SK-N-SH (cell line): ENCODE measurements at regions of chr1 and their contacts with region 1.

Region 1: GRCh38 chr1:26233903-26234643 is at the start of gene CEP85:
- DNase-seq: peak; percentile 99
- H3K4me3 ChIP-seq: peak within 1 kb of the TSS; percentile 86 to 99
- H3K27ac ChIP-seq: peak within 1 kb of the TSS; percentile 72 to 86
- H3K4me1 ChIP-seq: peaks cover 6 to 10% of the 10 kb centered on the region in 2 experiments; a peak in 2 of 4 replicates
- H3K27me3 ChIP-seq: no peaks in the 10 kb centered on the region
- CTCF ChIP-seq: peak; percentile 83
- EP300 ChIP-seq: no peak
- RAD21 ChIP-seq: peak; percentile 69
- polyA plus RNA-seq, gene CEP85: 12.1 and 16.6 TPM in 2 replicates

Region 2: DNA sequence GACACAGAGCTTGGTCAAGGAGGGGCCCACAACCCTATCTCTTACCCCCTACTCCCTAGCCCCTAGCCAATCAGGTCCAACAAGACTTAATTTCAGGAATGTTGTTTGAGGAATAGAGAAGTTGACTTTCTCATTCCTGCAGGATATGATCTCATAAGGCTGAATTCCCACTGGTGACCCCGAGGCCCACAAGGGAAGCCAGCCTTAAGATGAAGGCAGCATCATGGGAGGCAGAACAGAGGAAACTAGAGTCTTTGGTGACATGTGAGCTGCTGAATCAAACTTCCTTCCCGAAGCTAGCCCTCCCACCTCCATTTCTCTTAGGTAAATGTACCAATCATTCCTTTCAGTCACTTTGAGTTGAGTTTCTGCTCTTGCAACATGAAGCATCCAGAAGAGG is 131.5 kb before region 1 on chr1:
- CTCF ChIA-PET with region 1: interaction called, 11 read pairs
- POLR2A ChIA-PET with region 1: no interaction called
- DNase-seq: no peak
- H3K4me3 ChIP-seq: no peak overlapping the region
- H3K27ac ChIP-seq: no peak overlapping the region
- H3K4me1 ChIP-seq: no peaks in the 10 kb centered on the region
- H3K27me3 ChIP-seq: no peaks in the 10 kb centered on the region
- CTCF ChIP-seq: no peak
- EP300 ChIP-seq: no peak
- RAD21 ChIP-seq: no peak

Region 3: DNA sequence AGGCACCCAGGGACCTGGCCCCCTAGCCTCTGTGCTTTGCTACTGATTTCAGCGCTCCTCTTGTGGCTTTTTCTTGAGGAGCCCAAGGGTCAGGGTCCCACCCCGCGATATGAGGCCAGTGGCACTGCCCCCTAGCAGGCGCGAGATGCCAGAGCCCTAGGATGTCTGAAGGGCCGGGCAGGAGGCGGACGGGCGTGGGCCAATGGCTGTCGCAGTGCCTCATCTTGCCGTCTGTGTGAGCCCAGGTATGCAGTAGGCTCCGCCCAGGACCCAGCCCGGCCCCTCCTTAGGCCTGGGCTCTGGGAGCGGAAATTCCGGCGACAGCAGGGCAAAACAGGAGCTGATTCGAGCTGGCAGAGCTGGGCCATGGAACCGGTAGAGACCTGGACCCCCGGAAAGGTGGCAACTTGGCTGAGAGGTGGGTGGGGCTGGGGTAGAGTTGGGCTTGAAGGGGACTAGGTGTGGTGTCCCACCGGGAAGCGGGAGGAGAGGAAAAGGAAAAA is 56.8 kb before region 1 on chr1 and contains the start of gene CNKSR1:
- CTCF ChIA-PET with region 1: interaction called, 13 read pairs
- POLR2A ChIA-PET with region 1: no interaction called
- DNase-seq: no peak
- H3K4me3 ChIP-seq: no peak within 1 kb of the TSS
- H3K27ac ChIP-seq: no peak within 1 kb of the TSS
- H3K4me1 ChIP-seq: no peaks in the 10 kb centered on the region; a peak in 1 of 4 replicates
- H3K27me3 ChIP-seq: no peaks in the 10 kb centered on the region
- CTCF ChIP-seq: no peak
- EP300 ChIP-seq: no peak
- RAD21 ChIP-seq: no peak
- polyA plus RNA-seq, gene CNKSR1: 0.49 and 0.58 TPM in 2 replicates

Region 4: DNA sequence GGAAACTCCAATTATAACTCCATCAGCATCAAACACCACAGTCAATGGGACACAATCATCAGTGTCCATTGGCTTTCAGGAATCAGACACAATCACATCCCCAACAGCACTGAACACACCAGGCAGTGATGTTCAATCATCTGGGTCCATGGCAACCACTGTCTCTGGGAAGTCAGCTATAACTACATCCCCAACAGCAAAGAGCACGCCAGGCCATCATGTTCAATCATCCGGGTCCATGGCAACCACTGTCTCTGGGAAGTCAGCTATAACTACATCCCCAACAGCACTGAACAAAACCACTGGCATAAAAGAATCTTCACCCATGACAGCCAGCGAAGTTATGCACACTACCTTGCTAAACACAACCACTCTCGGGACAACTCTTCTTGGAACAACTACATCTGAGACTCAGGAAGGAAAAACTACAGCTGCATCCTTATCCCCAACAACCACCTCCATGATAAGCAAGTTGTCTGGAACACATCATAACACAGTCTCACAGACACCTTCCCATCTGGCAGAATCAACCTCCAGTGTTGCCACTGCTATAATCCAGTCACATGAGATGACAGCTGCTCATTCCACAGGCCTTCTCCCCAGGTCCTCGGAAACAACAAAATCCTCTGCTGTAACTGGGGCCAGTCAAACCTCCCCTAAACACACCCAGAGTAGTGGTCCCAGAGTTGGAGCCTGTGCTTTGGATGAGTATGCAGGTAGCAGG is 23.8 kb before region 1 on chr1:
- CTCF ChIA-PET with region 1: interaction called, 12 read pairs
- POLR2A ChIA-PET with region 1: interaction called, 3 read pairs
- DNase-seq: no peak
- H3K4me3 ChIP-seq: no peak overlapping the region
- H3K27ac ChIP-seq: no peak overlapping the region
- H3K4me1 ChIP-seq: no peaks in the 10 kb centered on the region
- H3K27me3 ChIP-seq: no peaks in the 10 kb centered on the region; the same call in 1 of the 2 replicates
- CTCF ChIP-seq: no peak
- EP300 ChIP-seq: no peak
- RAD21 ChIP-seq: no peak

Region 5: GRCh38 chr1:26284597-26285360 is 50.7 kb after region 1 on chr1:
- CTCF ChIA-PET with region 1: interaction called, 13 read pairs
- POLR2A ChIA-PET with region 1: no interaction called
- DNase-seq: peak; percentile 84
- H3K4me3 ChIP-seq: no peak overlapping the region; a peak in 1 of 4 replicates
- H3K27ac ChIP-seq: peak overlapping the region in 1 of 2 experiments; percentile 50; a peak in 2 of 4 replicates
- H3K4me1 ChIP-seq: peaks cover 28 to 33% of the 10 kb centered on the region in 2 experiments; a peak in 3 of 4 replicates
- H3K27me3 ChIP-seq: no peaks in the 10 kb centered on the region
- CTCF ChIP-seq: peak; percentile 75
- EP300 ChIP-seq: no peak
- RAD21 ChIP-seq: peak; percentile 66